ENCODE measurements at regions of chr3 and their contacts with region 1.

Region 1: GRCh38 chr3:65831733-65832425 is 206.8 kb downstream of the MAGI1 start:
- DNase-seq: peak; percentile 76
- H3K4me3 Mint-ChIP-seq: peak overlapping the region; percentile 46
- H3K27ac Mint-ChIP-seq: peak overlapping the region; percentile 75
- H3K4me1 Mint-ChIP-seq: peaks cover 42% of the 10 kb centered on the region
- H3K27me3 Mint-ChIP-seq: no peaks in the 10 kb centered on the region
- CTCF ChIP-seq: no peak

Region 2: GRCh38 chr3:65888980-65889706 is 57.3 kb after region 1 on chr3:
- CTCF ChIA-PET with region 1: interaction called, 5 read pairs
- POLR2A ChIA-PET with region 1: interaction called, 4 read pairs
- intact Hi-C with region 1: loop called (anchors 5 kb)
- DNase-seq: peak; percentile 65
- H3K4me3 Mint-ChIP-seq: peak overlapping the region; percentile 21
- H3K27ac Mint-ChIP-seq: peak overlapping the region; percentile 86
- H3K4me1 Mint-ChIP-seq: peaks cover 20% of the 10 kb centered on the region
- H3K27me3 Mint-ChIP-seq: no peaks in the 10 kb centered on the region
- CTCF ChIP-seq: no peak

Measured in MCF 10A (cell line).